B cell (primary cell): ENCODE measurements at regions of chr1 and their contacts with region 1.

Region 1: GRCh38 chr1:225860876-225861441 is 21.2 kb downstream of the TMEM63A start:
- DNase-seq: no peak
- ATAC-seq: no peak
- H3K4me3 ChIP-seq: no peak overlapping the region
- H3K4me3 Mint-ChIP-seq: no peak overlapping the region
- H3K27ac ChIP-seq: no peak overlapping the region
- H3K27ac Mint-ChIP-seq: no peak overlapping the region
- H3K4me1 ChIP-seq: peaks cover 5 to 10% of the 10 kb centered on the region in 2 donors
- H3K4me1 Mint-ChIP-seq: peaks cover 7% of the 10 kb centered on the region
- H3K27me3 ChIP-seq: no peaks in the 10 kb centered on the region
- H3K27me3 Mint-ChIP-seq: no peaks in the 10 kb centered on the region
- CTCF ChIP-seq: no peak

Region 2: DNA sequence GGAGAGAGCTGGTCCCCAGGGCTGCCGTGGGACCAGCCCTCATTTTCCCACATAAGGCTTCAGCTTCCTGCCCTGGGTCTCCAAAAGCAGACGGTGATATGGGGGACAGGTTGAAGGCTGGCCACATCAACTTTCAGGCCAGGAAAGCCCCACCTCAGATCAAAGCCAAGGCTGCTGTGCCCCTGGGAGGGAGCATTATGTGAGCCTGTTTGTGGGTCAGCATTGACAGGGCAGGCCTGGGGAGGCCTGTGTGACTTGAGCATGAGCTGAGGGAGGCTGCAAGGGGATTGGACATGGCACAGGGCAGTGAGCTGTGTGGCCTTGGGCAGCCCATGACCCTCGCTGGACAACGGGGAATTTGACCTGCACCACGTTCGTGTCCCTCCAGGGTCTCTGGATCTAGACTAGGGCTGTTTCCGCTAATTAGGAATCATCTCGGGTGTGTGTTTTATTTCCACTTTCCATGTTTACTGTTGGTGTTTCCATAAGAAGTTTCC is 45.5 kb after region 1 on chr1:
- CTCF ChIA-PET with region 1: interaction called, 3 read pairs
- POLR2A ChIA-PET with region 1: interaction called, 12 read pairs
- intact Hi-C with region 1: no loop called
- DNase-seq: no peak
- ATAC-seq: no peak
- H3K4me3 ChIP-seq: no peak overlapping the region
- H3K4me3 Mint-ChIP-seq: no peak overlapping the region
- H3K27ac ChIP-seq: no peak overlapping the region
- H3K27ac Mint-ChIP-seq: peak overlapping the region; percentile 29
- H3K4me1 ChIP-seq: peaks cover 21 to 22% of the 10 kb centered on the region in 2 donors
- H3K4me1 Mint-ChIP-seq: peaks cover 15% of the 10 kb centered on the region
- H3K27me3 ChIP-seq: no peaks in the 10 kb centered on the region
- H3K27me3 Mint-ChIP-seq: no peaks in the 10 kb centered on the region
- CTCF ChIP-seq: no peak